Endothelial cell of umbilical vein (primary cell): ENCODE measurements at regions of chr2 and their contacts with region 1.

Region 1: DNA sequence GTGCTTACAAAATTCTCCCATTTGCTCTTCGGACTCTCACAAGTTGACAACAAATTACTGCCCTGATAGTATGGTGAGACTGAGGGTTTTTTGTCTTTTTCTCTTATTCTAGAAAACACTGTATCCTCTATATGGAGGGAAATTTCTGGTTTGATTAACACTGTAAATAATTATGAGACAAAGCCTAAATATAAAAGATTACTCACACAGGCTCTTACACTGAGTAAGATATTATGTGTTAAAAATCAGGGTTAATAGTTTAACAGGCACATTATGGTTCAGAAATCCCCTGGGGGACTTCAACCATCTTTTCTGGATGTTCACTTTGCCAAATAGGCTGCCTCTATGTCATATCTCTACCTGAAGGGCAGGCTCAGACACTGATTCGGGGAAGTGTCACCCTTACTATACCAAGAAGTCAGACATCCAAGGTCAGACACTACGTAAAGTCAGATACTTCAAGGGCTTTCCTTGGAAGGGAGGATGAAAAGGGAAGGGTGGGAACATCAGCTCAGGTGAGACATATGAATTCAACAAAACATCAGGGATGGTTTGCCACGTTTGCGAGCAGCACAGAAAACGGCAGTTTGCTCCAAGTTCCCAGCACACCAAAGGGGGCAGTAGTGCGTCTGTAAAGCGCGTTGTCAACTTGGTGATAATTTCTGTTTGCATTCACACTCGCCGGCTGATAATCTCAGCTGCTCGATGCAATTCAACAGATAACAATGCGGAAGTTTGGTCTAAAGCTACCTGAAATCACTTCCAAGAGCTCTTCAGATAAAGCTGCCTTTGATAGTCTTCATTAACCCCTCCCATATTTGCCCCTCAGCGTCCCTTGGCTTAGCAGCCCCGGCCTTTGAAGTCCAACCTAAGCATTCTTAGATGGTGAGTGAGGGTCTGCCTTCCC is 972 bp upstream of the RASGRP3 start:
- DNase-seq: peak; percentile 87
- H3K4me3 ChIP-seq: peak overlapping the region; percentile 35 to 63 (median 42)
- H3K27ac ChIP-seq: peak overlapping the region; percentile 82
- H3K4me1 ChIP-seq: peaks cover 23% of the 10 kb centered on the region
- H3K27me3 ChIP-seq: peaks cover 3 to 5% of the 10 kb centered on the region in 2 experiments
- CTCF ChIP-seq: peak; percentile 85 to 86
- POLR2A ChIP-seq: no peak

Region 2: GRCh38 chr2:33342171-33342570 is 133.3 kb before region 1 on chr2:
- CTCF ChIA-PET with region 1: no interaction called
- POLR2A ChIA-PET with region 1: no interaction called
- dilution Hi-C with region 1: no loop called
- intact Hi-C with region 1: loop called (anchors 2 kb)
- DNase-seq: peak; percentile 98
- H3K4me3 ChIP-seq: no peak overlapping the region
- H3K27ac ChIP-seq: peak overlapping the region; percentile 99
- H3K4me1 ChIP-seq: peaks cover 28% of the 10 kb centered on the region
- H3K27me3 ChIP-seq: no peaks in the 10 kb centered on the region
- CTCF ChIP-seq: no peak
- POLR2A ChIP-seq: peak; percentile 40

Region 3: DNA sequence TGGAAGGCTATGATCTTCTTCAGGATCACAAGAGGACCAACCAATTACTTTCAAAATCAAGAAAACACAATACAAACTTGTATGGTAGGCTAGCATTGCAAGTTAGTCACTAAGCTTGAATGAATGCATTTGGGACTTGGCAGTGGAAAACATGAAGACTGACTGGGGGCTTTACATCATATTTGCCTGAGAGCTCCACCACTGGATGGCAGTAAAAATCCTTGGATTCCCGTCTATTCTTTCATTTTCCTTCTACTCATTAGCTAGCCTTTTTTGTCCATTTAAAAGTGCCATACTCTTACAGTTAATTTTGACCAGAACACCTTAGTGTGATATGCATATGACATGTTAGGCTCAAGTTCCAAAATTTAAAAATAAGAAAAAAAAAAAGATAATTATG is 62.6 kb before region 1 on chr2:
- CTCF ChIA-PET with region 1: interaction called, 13 read pairs
- POLR2A ChIA-PET with region 1: no interaction called
- dilution Hi-C with region 1: no loop called
- intact Hi-C with region 1: loop called (anchors 2 kb)
- DNase-seq: peak; percentile 82
- H3K4me3 ChIP-seq: no peak overlapping the region
- H3K27ac ChIP-seq: no peak overlapping the region
- H3K4me1 ChIP-seq: peaks cover 11% of the 10 kb centered on the region
- H3K27me3 ChIP-seq: no peaks in the 10 kb centered on the region
- CTCF ChIP-seq: peak; percentile 41 to 57
- POLR2A ChIP-seq: no peak

Region 4: GRCh38 chr2:33497221-33497650 is 21.8 kb after region 1 on chr2:
- CTCF ChIA-PET with region 1: interaction called, 9 read pairs
- POLR2A ChIA-PET with region 1: no interaction called
- dilution Hi-C with region 1: no loop called
- intact Hi-C with region 1: loop called (anchors 1 kb)
- DNase-seq: peak; percentile 88
- H3K4me3 ChIP-seq: no peak overlapping the region
- H3K27ac ChIP-seq: no peak overlapping the region
- H3K4me1 ChIP-seq: peaks cover 29% of the 10 kb centered on the region
- H3K27me3 ChIP-seq: peaks cover 6 to 13% of the 10 kb centered on the region in 2 experiments
- CTCF ChIP-seq: no peak
- POLR2A ChIP-seq: peak; percentile 32

Region 5: DNA sequence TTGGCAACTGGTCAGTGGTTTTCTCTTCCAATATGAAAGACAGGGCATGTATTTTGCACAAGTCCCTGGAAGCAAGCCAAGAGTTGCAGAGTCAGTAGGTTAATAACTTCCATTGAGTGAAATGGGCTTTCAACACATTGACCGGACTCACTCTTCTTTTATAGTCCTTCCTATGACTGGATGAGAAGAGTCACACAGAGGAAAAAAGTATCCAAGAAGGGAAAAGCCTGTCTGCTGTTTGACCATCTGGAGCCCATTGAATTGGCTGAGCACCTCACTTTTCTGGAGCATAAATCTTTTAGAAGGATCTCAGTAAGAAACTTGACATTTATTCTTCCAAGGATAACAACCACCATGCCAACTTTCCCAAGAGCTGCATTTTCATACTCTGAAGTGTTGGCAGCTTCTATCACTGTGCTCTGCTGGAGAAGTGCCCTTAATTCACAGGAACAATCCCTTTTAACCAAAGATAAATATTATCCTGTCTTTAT is 46.4 kb after region 1 on chr2:
- CTCF ChIA-PET with region 1: interaction called, 12 read pairs
- POLR2A ChIA-PET with region 1: no interaction called
- dilution Hi-C with region 1: no loop called
- intact Hi-C with region 1: no loop called
- DNase-seq: peak; percentile 97
- H3K4me3 ChIP-seq: no peak overlapping the region
- H3K27ac ChIP-seq: no peak overlapping the region
- H3K4me1 ChIP-seq: no peaks in the 10 kb centered on the region
- H3K27me3 ChIP-seq: peaks cover 0 to 8% of the 10 kb centered on the region in 2 experiments
- CTCF ChIP-seq: no peak
- POLR2A ChIP-seq: no peak

Region 6: DNA sequence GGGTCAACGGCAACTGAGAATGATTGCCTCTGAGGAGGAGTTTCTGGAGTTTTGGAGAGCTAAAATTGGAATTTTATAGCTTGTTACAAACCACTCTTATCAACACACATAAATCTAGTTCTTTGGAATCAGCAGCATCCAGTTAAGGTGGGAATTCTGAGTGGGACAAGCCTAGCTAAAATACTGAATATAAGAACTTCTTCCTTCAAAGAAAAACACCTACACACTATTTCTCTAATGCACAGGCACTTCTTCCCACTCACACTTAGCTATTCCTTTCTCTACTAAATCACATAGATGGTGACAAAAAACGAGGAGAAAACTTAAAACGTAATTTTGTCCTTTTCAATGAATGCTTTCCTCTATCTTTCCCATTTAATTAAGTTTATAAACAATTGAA is 80.2 kb after region 1 on chr2:
- CTCF ChIA-PET with region 1: interaction called, 9 read pairs
- POLR2A ChIA-PET with region 1: interaction called, 5 read pairs
- dilution Hi-C with region 1: no loop called
- intact Hi-C with region 1: loop called (anchors 1 kb)
- DNase-seq: no peak
- H3K4me3 ChIP-seq: no peak overlapping the region
- H3K27ac ChIP-seq: peak overlapping the region; percentile 73
- H3K4me1 ChIP-seq: peaks cover 26% of the 10 kb centered on the region
- H3K27me3 ChIP-seq: no peaks in the 10 kb centered on the region
- CTCF ChIP-seq: no peak
- POLR2A ChIP-seq: no peak

Region 7: DNA sequence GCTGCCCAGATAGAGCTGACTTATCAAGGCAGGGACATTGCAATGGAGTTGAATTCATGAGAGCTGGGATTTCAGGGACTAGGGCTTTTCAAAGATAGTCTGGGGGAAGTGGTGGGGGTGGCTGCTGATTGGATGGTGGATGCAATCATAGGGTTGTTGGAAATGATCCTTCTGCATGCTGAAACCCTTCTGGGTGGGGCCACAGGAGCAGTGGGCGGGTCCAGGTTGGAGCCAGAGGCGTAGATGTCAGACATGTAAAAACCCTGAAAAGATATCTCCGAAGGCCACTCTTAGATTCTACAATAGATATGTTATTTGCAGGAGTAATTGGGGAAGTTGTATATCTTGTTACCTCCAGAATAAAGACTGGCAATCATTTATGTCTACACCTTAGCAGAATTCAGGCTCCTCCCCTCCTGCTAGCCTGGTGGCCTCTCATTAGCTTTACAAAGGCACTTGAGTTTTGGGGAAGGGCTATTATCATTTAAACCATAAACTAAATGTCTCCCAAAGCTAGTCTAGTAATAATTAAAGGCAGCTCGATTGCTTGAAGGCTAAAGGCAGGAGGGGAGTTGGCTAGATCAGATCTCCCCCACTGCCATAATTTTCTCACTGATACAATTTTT is 131.8 kb after region 1 on chr2:
- CTCF ChIA-PET with region 1: no interaction called
- POLR2A ChIA-PET with region 1: no interaction called
- dilution Hi-C with region 1: no loop called
- intact Hi-C with region 1: no loop called
- DNase-seq: no peak
- H3K4me3 ChIP-seq: no peak overlapping the region
- H3K27ac ChIP-seq: no peak overlapping the region
- H3K4me1 ChIP-seq: no peaks in the 10 kb centered on the region
- H3K27me3 ChIP-seq: peaks cover 0 to under 1% of the 10 kb centered on the region in 2 experiments
- CTCF ChIP-seq: no peak
- POLR2A ChIP-seq: no peak

Region 8: DNA sequence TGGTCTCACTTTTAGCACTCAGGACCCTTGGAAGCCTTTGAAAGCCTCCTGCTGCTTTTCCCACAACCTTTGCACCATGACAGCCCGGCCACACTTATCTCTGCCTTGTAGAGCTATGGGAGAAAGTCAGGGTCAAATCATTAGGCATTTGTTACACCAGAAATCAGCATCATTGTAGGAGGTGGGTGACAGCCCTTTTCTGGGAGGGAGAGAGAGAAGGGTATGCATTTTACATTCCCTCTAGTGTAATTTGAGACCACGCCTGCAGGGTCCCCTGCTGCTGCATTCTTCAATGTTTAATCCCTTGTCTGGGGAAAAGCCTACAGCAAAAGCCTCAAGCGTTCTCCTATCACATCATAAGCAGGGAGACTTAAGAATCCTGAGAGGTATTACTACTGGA is 890.5 kb after region 1 on chr2:
- CTCF ChIA-PET with region 1: no interaction called
- POLR2A ChIA-PET with region 1: no interaction called
- dilution Hi-C with region 1: no loop called
- intact Hi-C with region 1: no loop called
- DNase-seq: no peak
- H3K4me3 ChIP-seq: no peak overlapping the region
- H3K27ac ChIP-seq: no peak overlapping the region
- H3K4me1 ChIP-seq: no peaks in the 10 kb centered on the region
- H3K27me3 ChIP-seq: no peaks in the 10 kb centered on the region
- CTCF ChIP-seq: no peak
- POLR2A ChIP-seq: no peak